ENCODE measurements at regions of chr18 and their contacts with region 1.

Region 1: DNA sequence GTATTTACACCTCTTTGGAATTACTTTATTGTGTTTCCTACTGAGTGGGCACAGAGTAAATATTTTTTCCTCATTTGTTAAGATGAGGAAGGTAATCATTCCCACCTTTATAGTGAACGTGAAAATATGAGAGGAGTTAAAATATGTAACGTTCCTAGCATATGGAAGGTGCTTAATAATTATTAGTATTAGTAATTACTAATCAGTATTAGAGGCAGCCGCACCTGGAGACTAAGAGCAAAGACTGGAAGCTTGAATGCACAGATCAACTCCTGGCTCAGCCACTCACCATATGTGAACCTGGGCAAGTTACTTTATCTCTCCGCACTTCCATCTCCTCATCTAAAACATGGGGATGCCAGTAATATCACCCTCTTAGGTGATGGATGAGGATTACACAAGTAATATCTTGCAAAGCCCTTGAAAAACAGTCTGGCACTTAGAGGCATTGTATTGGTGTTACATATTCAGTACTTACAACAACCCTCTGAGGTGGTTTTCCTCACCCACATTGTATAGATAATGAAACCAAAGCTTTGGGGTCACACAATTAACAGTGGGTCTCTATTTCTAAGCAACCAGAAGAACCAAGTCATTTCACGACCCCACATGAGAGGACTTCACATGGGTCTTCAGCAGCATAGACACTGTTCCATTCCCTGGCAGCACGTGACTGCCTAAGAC is 100.3 kb upstream of the KCTD1 start:
- DNase-seq: no peak
- H3K4me3 Mint-ChIP-seq: no peak overlapping the region
- H3K27ac Mint-ChIP-seq: no peak overlapping the region
- H3K4me1 Mint-ChIP-seq: no peaks in the 10 kb centered on the region
- H3K27me3 Mint-ChIP-seq: peaks cover 37% of the 10 kb centered on the region

Region 2: DNA sequence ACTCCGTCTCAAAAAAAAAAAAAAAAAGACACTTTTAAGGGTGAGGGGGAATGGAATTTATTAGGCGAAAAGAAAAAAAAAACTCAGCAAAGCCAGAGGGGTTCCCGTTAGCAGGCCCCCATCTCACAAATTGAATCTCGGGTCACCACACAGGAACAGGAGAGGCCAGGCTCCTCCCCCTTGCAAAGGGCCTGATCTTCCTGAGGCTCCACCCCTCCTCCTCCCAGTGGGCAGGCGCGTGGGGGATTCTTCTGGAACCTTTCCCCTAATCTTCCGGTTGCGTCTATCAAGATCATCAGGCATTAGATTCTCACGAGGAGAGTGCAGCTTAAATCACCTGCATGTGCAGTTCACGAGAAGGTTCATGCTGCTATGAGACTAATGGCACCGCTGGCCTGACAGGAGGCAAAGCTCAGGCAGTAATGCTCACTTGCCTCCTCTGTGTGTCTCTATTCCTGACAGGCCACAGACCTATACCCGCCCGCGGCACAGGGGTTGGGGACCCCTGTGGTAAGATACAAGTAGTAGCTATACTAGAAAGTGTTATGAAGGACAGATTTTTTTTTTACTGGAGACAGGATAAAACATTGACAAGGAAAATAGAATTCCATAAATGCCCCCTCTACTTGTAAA is 376.6 kb before region 1 on chr18:
- intact Hi-C with region 1: no loop called
- DNase-seq: no peak
- H3K4me3 Mint-ChIP-seq: no peak overlapping the region
- H3K27ac Mint-ChIP-seq: no peak overlapping the region
- H3K4me1 Mint-ChIP-seq: no peaks in the 10 kb centered on the region
- H3K27me3 Mint-ChIP-seq: no peaks in the 10 kb centered on the region

Region 3: DNA sequence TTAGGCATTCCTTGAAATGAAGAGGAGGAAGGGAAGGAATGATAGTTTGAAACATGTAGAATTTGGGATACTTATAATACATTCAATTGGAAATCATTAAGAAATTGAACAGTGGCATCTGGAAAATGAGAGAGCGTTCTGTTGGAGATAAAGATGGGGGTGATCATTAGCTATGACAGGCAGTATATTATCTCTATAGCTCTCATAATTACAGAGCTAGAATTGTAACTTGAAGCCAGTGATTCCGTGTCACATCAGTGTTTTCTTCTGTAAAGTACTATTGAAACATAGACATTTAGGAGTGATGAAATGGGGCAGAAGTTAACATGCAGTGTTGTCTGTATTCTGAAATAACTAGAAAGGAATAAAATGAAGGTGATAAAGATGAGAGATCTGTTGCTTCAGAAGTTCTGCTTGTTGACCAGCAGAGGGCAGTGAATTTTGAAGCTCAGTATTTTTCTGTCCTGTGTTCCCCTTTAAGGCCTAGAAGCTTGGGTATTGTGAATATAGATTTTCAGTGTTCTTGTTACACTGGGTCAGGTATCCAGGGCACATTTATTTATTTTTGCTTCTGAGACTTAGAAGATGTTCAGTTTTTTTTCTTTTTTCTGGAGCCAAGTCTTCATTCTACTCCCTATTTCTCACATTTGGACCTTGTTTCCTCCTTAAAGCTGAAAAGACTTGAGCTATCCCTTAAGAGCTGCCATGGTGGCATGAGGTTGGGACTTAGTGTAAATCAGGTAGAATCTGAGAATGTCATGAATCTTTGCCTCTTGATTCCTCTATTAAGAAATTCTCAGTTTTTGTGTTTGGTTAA is 265.0 kb before region 1 on chr18:
- intact Hi-C with region 1: loop called (anchors 5 kb)
- DNase-seq: peak; percentile 65
- H3K4me3 Mint-ChIP-seq: no peak overlapping the region
- H3K27ac Mint-ChIP-seq: no peak overlapping the region
- H3K4me1 Mint-ChIP-seq: no peaks in the 10 kb centered on the region
- H3K27me3 Mint-ChIP-seq: no peaks in the 10 kb centered on the region